Activated CD8-positive, alpha-beta memory T cell treated with anti-CD3 and anti-CD28 coated beads, Interleukin-2, amount 10 ng/mL, durations not matched to agents 7 days and 5 days (primary cell): ENCODE measurements at regions of chr14 and their contacts with region 1.

Region 1: DNA sequence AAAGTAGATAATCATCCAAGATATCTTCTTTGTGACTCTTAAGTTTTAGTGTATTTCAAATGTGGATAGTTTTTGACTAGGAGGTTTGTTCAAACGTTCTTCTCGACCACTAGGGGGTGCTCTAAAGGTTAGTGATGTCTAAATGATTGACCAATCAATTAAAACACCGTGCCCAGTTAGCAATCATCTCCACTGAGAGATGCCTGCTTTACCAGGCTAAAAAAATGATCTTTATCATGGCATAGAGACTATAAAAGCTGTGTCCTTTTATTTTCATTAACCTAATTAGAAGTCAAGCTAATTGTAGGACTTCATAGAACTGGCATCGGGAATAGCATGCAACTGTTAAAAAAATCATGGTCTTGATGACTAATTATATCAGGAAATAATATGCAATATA is 153.9 kb downstream of the PRKCH start:
- DNase-seq: no peak
- ATAC-seq: no peak
- H3K4me3 Mint-ChIP-seq: no peak overlapping the region
- H3K27ac Mint-ChIP-seq: peak overlapping the region; percentile 85
- H3K4me1 Mint-ChIP-seq: peaks cover 95% of the 10 kb centered on the region
- H3K27me3 Mint-ChIP-seq: no peaks in the 10 kb centered on the region

Region 2: DNA sequence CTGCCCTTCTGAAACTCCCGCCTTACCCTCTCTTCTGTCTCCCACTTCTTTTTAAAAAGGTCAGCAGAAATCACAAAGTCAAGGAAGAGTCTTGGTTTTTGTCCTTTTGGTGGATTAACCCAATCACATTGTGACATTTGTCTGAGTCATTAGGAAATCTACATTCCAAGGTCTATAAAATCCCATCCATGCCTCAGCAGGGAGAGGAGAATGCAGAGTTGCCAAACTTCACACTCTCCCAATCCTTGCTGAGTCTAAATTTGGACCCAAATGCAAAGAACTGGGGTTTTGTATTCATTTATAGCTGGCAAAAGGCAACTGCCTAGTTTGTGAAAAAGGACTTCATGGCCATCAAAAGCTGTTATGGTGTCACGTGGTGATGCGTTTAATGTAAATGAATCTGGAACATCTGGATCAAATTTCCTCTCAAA is 262.1 kb before region 1 on chr14:
- CTCF ChIA-PET with region 1: no interaction called
- DNase-seq: no peak
- ATAC-seq: no peak
- H3K4me3 Mint-ChIP-seq: no peak overlapping the region
- H3K27ac Mint-ChIP-seq: no peak overlapping the region
- H3K4me1 Mint-ChIP-seq: no peaks in the 10 kb centered on the region
- H3K27me3 Mint-ChIP-seq: peaks cover 23% of the 10 kb centered on the region

Region 3: DNA sequence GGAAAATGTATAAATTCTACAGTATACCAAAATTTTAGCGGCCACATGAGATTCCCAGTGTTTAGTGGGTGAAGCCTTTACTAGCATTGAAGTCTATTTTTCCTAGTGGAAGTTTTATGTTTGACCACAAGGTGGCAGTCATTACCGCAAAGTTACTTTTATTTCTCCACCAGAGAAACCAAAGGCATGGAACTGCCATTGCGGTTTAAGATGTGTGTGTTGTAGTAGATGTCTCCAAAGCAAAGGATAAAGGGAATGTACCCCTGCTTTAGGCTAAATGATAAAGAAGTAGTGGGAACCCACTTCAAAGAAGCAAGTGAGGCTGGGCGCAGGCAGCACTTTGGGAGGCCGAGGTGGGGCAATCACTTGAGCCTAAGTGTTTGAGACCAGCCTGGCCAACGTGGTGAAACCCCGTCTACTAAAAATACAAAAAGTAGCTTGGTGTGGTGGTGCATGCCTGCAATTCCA is 13.5 kb before region 1 on chr14:
- CTCF ChIA-PET with region 1: interaction called, 23 read pairs
- DNase-seq: no peak
- ATAC-seq: peak; percentile 40
- H3K4me3 Mint-ChIP-seq: no peak overlapping the region
- H3K27ac Mint-ChIP-seq: peak overlapping the region; percentile 87
- H3K4me1 Mint-ChIP-seq: peaks cover 67% of the 10 kb centered on the region
- H3K27me3 Mint-ChIP-seq: no peaks in the 10 kb centered on the region

Region 4: GRCh38 chr14:61493239-61493638 is 17.9 kb after region 1 on chr14:
- CTCF ChIA-PET with region 1: interaction called, 39 read pairs
- DNase-seq: no peak
- ATAC-seq: no peak
- H3K4me3 Mint-ChIP-seq: no peak overlapping the region
- H3K27ac Mint-ChIP-seq: no peak overlapping the region
- H3K4me1 Mint-ChIP-seq: peaks cover 15% of the 10 kb centered on the region
- H3K27me3 Mint-ChIP-seq: no peaks in the 10 kb centered on the region

Region 5: GRCh38 chr14:61525293-61526011 is 50.1 kb after region 1 on chr14:
- CTCF ChIA-PET with region 1: interaction called, 28 read pairs
- DNase-seq: peak; percentile 91
- ATAC-seq: peak; percentile 80
- H3K4me3 Mint-ChIP-seq: peak overlapping the region; percentile 21
- H3K27ac Mint-ChIP-seq: peak overlapping the region; percentile 61
- H3K4me1 Mint-ChIP-seq: peaks cover 81% of the 10 kb centered on the region
- H3K27me3 Mint-ChIP-seq: no peaks in the 10 kb centered on the region

Region 6: DNA sequence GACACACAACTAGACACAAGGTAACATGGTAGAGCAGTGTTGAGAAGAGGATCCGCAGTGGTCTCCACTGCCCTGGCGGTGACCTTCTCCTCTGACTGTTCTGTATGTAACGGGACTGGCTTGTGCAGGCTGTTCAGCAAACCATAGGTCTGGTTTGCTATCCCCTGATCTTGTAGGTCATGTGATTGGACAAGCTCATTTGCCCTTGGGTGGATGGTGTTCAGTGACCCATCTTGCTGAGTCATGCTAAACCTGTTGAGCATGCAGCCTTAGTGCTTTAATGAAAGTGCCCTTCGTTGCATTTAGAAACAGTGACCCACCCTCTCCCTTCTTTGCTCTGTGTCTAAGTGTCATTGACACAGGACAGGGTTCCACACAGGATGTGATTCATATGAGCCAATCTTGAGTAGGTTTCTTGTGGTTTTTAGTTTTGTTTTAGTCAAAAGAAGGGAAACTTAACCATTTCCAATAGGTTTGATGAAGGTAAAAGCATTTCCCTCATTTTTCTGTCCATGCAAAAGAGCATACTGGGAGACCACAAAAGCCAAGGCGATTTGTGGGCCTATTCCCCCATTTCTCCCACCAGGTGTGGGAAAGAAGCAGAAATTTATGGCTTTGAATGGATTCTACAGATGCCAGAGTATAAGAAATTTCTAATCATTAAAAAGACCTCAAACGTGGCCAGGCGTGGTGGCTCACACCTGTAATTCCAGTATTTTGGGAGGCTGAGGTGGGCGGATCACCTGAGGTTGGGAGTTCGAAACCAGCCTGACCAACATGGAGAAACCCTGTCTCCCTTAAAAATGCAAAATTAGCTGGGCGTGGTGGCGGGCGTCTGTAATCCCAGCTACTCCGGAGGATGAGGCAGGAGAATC is 187.4 kb after region 1 on chr14:
- CTCF ChIA-PET with region 1: interaction called, 10 read pairs
- DNase-seq: peak; percentile 92
- ATAC-seq: peak; percentile 85
- H3K4me3 Mint-ChIP-seq: peak overlapping the region; percentile 65
- H3K27ac Mint-ChIP-seq: peak overlapping the region; percentile 96
- H3K4me1 Mint-ChIP-seq: peaks cover 68% of the 10 kb centered on the region
- H3K27me3 Mint-ChIP-seq: no peaks in the 10 kb centered on the region